Heart left ventricle (tissue), 16 donors: ENCODE measurements at regions of chr4 and their contacts with region 1.

Region 1: DNA sequence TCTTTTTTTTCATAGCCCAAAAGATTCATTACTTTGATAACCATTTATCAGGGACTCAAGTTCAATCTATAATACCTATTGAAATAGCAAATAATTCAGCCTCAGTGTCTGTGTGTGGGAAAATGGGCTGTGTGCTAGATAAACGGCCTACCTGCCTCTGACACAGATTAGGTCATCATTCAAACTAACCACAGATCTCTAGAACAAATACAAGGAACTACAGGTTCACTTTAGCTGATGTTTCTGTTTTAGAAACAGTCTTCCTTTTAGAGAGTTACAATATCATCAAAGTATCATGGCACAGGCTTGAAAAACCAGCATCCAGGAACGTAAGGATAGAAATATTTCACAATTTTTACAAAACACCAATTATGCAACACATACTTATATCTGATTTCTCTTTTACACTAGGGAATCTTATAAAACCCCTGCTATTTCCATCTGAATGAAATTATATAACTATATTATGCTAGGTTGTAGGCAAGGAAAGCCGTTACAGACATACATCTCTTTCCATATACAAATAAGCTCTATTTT is 56.6 kb upstream of the MAB21L2 start:
- DNase-seq: no peak
- ATAC-seq: no peak
- H3K4me3 ChIP-seq: no peak overlapping the region
- H3K27ac ChIP-seq: no peak overlapping the region
- H3K4me1 ChIP-seq: no peaks in the 10 kb centered on the region
- H3K27me3 ChIP-seq: no peaks in the 10 kb centered on the region
- CTCF ChIP-seq: no peak
- POLR2A ChIP-seq: no peak

Region 2: DNA sequence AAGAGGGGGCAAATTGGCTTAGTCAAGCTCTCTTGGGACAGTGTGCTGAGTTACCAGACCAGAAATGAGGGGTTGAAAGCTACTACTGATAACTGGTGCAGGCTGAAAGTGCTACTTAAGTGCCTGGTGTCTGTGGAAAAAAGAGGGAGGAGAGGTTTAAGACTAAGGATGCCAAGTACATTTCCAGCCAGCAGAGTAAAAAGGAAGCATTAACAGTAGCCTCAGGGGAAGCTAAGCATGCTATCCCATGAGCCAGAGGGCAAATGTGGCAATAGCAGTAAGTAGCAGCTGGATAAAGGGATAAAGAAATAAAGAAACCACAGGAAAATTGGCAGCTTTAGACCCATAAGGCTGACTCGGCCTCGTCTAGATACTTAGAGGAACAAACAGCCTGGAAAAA is 139.8 kb before region 1 on chr4:
- intact Hi-C with region 1: no loop called
- DNase-seq: peak in 2 of 5 donors; percentile 9 to 26
- ATAC-seq: peak in 3 of 4 donors; percentile 49 to 96 (median 91)
- H3K4me3 ChIP-seq: no peak overlapping the region
- H3K27ac ChIP-seq: no peak overlapping the region
- H3K4me1 ChIP-seq: peaks cover 0 to 11% (median 0%) of the 10 kb centered on the region in 12 donors
- H3K27me3 ChIP-seq: no peaks in the 10 kb centered on the region
- CTCF ChIP-seq: no peak
- POLR2A ChIP-seq: no peak

Region 3: GRCh38 chr4:150543042-150543441 is 17.6 kb after region 1 on chr4:
- intact Hi-C with region 1: loop called in 1 of 10 experiments (anchors 2 kb)
- DNase-seq: no peak
- ATAC-seq: no peak
- H3K4me3 ChIP-seq: no peak overlapping the region
- H3K27ac ChIP-seq: no peak overlapping the region
- H3K4me1 ChIP-seq: peaks cover 0 to 3% (median 0%) of the 10 kb centered on the region in 12 donors
- H3K27me3 ChIP-seq: no peaks in the 10 kb centered on the region
- CTCF ChIP-seq: no peak
- POLR2A ChIP-seq: no peak